Left lung (tissue), 14 donors: ENCODE measurements at regions of chr6 and their contacts with region 1.

Region 1: GRCh38 chr6:37169496-37170272 is at the start of gene PIM1:
- DNase-seq: peak; percentile 97 to 100 (median 99)
- ATAC-seq: peak; percentile 87
- H3K4me3 ChIP-seq: peak within 1 kb of the TSS; percentile 73 to 95
- H3K27ac ChIP-seq: peak within 1 kb of the TSS; percentile 92 to 97
- H3K4me1 ChIP-seq: peaks cover 0 to 37% of the 10 kb centered on the region in 2 donors
- H3K27me3 ChIP-seq: no peaks in the 10 kb centered on the region
- CTCF ChIP-seq: no peak
- polyA plus RNA-seq, gene PIM1: 13.1 to 21.5 (median 20.3) TPM

Region 2: DNA sequence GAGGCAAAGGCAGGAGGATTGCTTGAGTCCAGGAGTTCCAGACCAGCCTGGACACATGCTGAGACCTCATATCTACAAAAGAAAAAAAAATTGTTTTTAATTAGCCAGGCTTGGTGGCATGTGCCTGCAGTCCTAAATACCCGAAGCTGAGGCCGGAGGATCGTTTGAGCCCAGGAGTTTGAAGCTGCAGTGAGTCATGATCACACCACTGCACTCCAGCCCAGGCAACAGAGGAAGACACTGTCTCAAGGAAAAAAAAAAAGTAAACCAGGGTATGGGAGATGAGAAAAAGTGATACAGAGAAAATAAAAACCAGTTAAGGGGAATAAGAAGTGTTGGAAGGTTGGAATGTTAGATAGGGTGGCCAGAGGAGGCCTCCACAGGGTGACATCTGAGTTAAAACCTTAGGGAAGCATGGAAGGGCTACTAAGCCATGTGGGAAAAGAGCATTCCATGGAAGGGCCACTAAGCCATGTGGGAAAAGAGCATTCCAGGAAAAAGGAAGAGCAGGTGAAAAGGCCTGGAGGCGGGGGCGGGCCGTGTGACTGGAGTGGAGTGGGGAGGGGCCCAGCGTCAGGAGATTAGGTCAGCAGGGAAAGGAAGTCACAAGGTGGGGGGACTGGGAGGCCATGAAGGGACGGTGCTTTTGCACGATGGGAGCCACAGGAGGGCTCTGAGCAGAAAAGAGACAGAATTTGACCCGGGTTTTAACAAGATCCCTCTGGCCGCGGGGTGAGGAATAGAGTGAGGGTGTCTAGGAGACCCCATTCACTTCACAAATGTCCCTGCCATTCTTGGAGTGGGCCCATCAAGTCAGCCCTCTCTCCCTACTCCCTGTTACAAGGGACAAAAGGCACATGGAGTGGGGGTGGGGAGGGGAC is 348.7 kb before region 1 on chr6:
- intact Hi-C with region 1: no loop called
- DNase-seq: peak in 1 of 4 donors; percentile 54
- ATAC-seq: peak; percentile 53
- H3K4me3 ChIP-seq: no peak overlapping the region
- H3K27ac ChIP-seq: peak overlapping the region in 1 of 2 donors; percentile 33
- H3K4me1 ChIP-seq: peaks cover 0 to 5% of the 10 kb centered on the region in 2 donors
- H3K27me3 ChIP-seq: no peaks in the 10 kb centered on the region
- CTCF ChIP-seq: no peak

Region 3: DNA sequence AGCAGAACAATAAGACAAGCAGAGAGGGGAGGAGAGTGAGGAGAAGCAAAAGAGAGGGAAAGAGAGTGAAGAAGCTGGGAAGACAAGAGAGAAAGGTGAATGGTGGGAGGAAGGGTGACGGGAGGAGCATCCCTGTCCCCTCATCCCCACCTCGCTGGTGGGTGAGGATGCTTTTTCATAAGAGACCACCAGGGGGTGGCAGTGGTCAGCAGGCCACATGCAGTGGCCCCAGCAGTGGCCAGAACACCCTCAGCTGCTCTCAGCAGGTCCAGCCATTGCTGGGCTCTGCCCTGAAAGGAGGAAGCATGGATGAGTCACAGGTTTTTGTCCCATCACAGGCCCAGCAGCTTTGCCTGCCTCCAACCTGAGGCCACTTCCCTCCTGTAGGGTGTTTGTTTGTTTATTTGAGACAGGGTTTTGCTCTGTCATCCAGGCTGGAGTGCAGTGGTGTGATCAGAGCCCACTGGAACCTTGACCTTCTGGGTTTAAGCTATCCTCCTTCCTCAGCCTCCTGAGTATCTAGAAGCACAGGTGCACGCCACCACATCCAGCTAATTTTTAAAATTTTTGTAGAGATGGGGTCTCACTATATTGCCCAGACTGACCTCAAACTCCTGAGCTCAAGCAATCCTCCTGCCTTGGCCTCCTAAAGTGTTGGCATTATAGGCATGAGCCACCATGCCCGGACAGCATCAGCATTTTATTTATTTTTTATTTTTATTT is 140.3 kb before region 1 on chr6:
- intact Hi-C with region 1: loop called in 1 of 2 experiments (anchors 10 kb)
- DNase-seq: peak in 3 of 4 donors; percentile 46 to 92 (median 89)
- ATAC-seq: peak; percentile 93
- H3K4me3 ChIP-seq: no peak overlapping the region
- H3K27ac ChIP-seq: peak overlapping the region in 1 of 2 donors; percentile 86
- H3K4me1 ChIP-seq: peaks cover 0 to 38% of the 10 kb centered on the region in 2 donors
- H3K27me3 ChIP-seq: no peaks in the 10 kb centered on the region
- CTCF ChIP-seq: peak; percentile 72 to 80

Region 4: DNA sequence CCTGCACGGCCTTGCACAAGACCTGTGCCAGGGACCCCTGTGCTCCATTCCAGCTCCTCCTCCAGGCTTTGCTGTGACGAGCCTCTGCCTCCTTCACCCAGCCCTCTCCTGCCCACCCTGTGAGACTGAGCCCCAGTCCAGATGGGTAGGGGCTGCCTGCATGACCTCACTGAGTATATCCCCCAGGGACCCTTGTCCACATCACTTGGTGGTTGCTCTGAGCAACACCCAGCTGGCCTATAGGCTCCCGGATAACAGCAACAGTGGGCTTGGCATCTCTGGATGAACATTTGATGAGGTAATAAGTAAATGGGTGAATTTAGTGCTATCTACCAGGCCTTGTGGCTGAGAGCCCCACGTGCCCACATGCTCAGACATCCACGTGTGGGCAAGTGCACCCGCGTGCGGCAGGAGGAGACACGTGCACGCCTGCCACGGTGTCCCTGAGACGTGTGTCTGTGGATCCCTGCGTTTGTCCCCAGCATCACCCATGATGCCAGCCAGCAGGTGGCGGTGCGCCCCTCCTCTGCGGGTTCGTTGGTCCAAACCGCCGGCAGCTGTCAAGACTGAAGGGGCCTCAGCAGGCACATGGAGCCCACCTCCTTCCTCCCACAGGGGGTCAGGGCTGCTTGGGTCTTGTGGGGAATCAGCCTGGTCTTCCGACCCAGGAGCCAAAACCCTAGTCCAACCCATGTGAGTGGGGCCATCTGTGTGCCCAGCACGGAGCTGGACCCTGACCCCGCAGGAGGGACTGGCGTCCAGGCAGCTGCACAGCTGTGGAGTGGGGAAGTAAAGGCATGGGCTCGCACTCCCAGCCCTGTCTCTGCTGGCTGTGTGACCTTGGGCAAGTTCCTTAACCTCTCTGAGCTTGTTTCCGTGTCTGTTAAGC is 118.3 kb before region 1 on chr6:
- intact Hi-C with region 1: loop called (anchors 5 to 10 kb)
- DNase-seq: peak; percentile 73 to 99 (median 90)
- ATAC-seq: peak; percentile 89
- H3K4me3 ChIP-seq: peak overlapping the region in 1 of 2 donors; percentile 24
- H3K27ac ChIP-seq: peak overlapping the region in 1 of 2 donors; percentile 96
- H3K4me1 ChIP-seq: peaks cover 5 to 57% of the 10 kb centered on the region in 2 donors
- H3K27me3 ChIP-seq: no peaks in the 10 kb centered on the region
- CTCF ChIP-seq: peak; percentile 82 to 93